ENCODE measurements at regions of chr7 and their contacts with region 1.

Region 1: GRCh38 chr7:93117852-93118530 is at the start of gene SAMD9:
- DNase-seq: peak; percentile 63
- H3K4me3 Mint-ChIP-seq: peak within 1 kb of the TSS; percentile 91
- H3K27ac Mint-ChIP-seq: peak within 1 kb of the TSS; percentile 82
- H3K4me1 Mint-ChIP-seq: peaks cover 60% of the 10 kb centered on the region
- H3K27me3 Mint-ChIP-seq: no peaks in the 10 kb centered on the region
- total RNA-seq, gene SAMD9: 11.5 and 11.8 TPM in 2 replicates

Region 2: GRCh38 chr7:92590711-92591310 is 527.2 kb before region 1 on chr7:
- intact Hi-C with region 1: loop called (anchors 2 kb)
- DNase-seq: no peak
- H3K4me3 Mint-ChIP-seq: peak overlapping the region; percentile 92
- H3K27ac Mint-ChIP-seq: no peak overlapping the region
- H3K4me1 Mint-ChIP-seq: peaks cover 37% of the 10 kb centered on the region
- H3K27me3 Mint-ChIP-seq: peaks cover 5% of the 10 kb centered on the region

Region 3: DNA sequence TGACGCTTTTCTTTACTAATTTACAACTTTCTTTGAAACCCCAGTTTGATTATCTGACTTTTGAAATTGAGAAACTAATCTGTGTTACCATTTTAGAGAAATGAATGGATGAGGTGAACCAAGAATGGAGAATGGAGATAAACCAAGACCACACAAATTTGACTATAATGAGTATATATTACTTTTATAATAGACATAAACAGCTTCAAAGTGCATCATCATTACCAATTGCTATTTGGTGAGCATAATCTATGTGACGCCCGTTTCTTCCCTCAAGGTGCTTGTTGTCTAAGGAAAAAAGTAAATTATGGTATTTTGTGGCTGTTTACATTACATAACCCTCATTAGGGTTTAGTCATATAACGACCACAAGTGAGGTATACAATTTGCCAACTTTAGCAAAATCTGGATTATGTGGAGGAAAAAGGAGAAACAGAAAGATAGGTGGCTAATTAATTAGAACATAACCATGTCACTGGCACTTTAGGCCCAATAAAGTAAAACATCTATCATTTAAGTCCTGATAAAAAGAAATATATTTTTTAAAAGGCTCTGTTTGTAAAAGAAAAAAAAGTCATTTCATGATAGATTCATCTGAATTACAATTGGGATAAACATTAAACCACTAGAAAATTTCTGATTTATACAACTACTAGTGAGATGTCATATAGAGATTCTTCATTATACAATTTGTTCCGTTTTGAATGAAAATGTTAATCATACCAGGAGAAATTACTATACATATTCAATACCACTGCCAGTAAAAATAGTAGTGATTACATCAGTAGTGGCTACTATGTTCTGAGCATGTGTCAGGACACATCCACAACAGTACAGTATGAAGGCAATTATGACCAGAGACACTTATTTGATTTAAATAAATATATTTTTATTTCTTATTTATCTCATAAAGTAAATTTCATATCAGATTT is 409.6 kb before region 1 on chr7:
- intact Hi-C with region 1: loop called (anchors 5 kb)
- DNase-seq: no peak
- H3K4me3 Mint-ChIP-seq: no peak overlapping the region
- H3K27ac Mint-ChIP-seq: peak overlapping the region; percentile 84
- H3K4me1 Mint-ChIP-seq: peaks cover 59% of the 10 kb centered on the region
- H3K27me3 Mint-ChIP-seq: no peaks in the 10 kb centered on the region

Region 4: DNA sequence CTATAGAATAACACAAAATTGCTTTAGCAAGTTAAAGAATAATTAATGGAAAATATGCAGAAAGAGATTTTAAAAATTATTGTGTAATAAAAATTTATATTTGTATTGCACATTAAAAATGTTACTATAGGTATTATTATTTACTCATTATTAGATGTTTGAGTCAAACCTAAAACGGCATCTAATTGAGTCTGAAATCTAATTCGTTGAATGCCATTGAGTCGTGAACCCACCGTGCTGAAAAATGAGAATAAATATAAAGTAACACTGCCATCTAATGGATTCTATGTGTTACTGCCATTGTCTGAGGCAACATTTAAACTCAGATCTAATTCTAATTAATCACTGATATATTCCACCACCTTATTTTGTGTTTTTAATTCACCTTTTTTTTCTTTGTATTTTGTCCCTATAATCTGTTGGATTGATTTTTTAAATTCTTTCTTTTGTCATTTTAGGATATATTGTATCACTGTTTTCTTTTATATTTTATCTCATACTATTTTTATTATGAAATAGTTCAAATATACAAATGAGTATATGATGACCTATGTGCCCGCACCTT is 62.4 kb before region 1 on chr7:
- intact Hi-C with region 1: loop called (anchors 5 kb)
- DNase-seq: no peak
- H3K4me3 Mint-ChIP-seq: no peak overlapping the region
- H3K27ac Mint-ChIP-seq: no peak overlapping the region
- H3K4me1 Mint-ChIP-seq: peaks cover 19% of the 10 kb centered on the region
- H3K27me3 Mint-ChIP-seq: peaks cover 6% of the 10 kb centered on the region

Region 5: DNA sequence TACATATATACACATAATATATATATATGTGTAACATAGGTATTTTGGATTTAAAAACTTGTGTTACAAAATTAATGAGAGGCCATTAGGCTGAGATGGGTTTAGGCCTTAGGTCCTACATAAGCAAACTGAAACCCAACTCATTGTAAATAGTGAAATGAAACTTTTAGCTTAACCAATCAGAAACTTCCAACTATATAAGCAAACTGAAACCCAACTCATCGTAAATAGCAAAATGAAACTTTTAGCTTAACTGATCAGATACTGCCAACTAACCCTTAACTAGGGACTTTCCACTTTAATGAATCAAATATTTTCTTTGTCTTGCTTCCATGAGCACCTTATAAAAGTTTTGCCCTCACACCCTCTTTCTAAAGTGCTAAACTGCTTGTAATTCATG is 47.5 kb after region 1 on chr7:
- intact Hi-C with region 1: loop called (anchors 5 kb)
- DNase-seq: no peak
- H3K4me3 Mint-ChIP-seq: no peak overlapping the region
- H3K27ac Mint-ChIP-seq: no peak overlapping the region
- H3K4me1 Mint-ChIP-seq: no peaks in the 10 kb centered on the region
- H3K27me3 Mint-ChIP-seq: peaks cover 2% of the 10 kb centered on the region

Region 6: GRCh38 chr7:93327006-93327633 is 209.1 kb after region 1 on chr7:
- intact Hi-C with region 1: no loop called
- DNase-seq: no peak
- H3K4me3 Mint-ChIP-seq: no peak overlapping the region
- H3K27ac Mint-ChIP-seq: no peak overlapping the region
- H3K4me1 Mint-ChIP-seq: no peaks in the 10 kb centered on the region
- H3K27me3 Mint-ChIP-seq: no peaks in the 10 kb centered on the region